Activated CD8-positive, alpha-beta T cell treated with anti-CD3 and anti-CD28 coated beads, Interleukin-2, amount 10 ng/mL, durations not matched to agents 7 days and 5 days (primary cell): ENCODE measurements at regions of chr20 and their contacts with region 1.

Region 1: DNA sequence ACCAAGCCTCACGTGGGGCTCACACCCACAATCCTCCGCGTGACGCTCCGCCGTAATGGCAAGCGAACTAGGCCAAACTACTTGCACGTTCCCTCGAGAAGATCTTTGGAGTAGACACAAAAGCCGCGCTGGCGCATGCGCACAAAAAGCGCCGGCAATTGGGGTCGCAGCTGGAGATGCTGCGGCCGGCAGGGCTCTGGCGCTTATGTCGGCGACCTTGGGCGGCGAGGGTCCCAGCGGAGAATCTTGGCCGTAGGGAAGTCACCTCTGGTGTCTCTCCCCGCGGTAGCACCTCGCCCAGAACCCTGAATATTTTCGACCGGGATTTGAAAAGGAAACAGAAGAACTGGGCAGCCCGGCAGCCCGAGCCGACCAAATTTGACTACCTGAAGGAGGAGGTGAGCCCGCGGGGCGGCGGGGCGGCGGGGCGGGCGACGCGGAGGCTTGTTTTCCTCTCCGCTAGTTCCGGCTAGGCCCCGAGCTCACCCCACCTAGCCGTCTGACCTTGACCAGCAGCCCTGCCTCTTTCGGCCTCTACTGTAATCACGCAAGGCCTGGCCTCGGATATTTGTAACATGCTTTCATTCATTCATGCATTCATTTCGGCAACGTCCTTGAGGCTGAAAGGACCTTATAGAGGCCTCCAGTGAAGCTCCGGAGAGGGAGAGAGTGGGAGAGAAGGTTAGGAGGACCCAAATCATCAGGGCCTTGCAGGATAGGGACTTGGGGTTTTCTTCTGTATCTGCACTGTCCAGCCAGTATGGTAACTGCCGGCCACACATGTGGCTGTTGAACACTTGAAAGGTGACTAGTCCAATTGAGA is at the starts of genes ESF1 and NDUFAF5:
- DNase-seq: peak; percentile 96
- ATAC-seq: peak; percentile 98
- H3K4me3 Mint-ChIP-seq: peak within 1 kb of the TSS; percentile 95
- H3K27ac Mint-ChIP-seq: peak within 1 kb of the TSS; percentile 93
- H3K4me1 Mint-ChIP-seq: peaks cover 34% of the 10 kb centered on the region
- H3K27me3 Mint-ChIP-seq: no peaks in the 10 kb centered on the region
- total RNA-seq, gene ESF1: 13.1 to 13.2 TPM
- total RNA-seq, gene NDUFAF5: 26.3 to 34.6 TPM

Region 2: DNA sequence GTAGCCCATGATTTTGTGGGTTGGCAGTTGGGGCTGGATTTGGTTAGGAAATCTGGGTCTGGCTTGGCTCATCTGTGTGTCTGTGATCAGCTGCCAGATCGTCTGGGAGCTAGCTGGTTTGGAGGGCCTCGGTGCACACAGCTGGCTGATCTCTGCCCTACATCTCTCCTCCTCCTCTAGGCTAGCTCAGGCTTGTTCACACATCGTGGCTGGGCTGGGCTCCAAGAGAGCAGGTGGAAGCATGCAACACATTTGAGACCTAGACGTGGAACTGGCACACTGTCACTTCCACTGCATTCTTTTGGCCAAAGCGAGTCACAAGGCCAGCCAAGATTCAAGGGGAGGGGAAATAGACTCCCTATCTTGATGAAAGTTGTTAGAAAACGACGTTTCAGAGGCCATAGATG is 15.6 kb after region 1 on chr20:
- CTCF ChIA-PET with region 1: interaction called, 12 read pairs
- POLR2A ChIA-PET with region 1: interaction called, 5 read pairs
- DNase-seq: no peak
- ATAC-seq: no peak
- H3K4me3 Mint-ChIP-seq: no peak overlapping the region
- H3K27ac Mint-ChIP-seq: no peak overlapping the region
- H3K4me1 Mint-ChIP-seq: no peaks in the 10 kb centered on the region
- H3K27me3 Mint-ChIP-seq: no peaks in the 10 kb centered on the region